ENCODE measurements at regions of chr9 and their contacts with region 1.

Region 1: GRCh38 chr9:87336914-87337333 is 160.7 kb upstream of the DAPK1 start:
- DNase-seq: peak in 4 of 14 experiments; percentile 2 to 56 (median 36)
- ATAC-seq: no peak
- H3K4me3 ChIP-seq: peak overlapping the region; percentile 29
- H3K4me3 Mint-ChIP-seq: peak overlapping the region; percentile 83
- H3K27ac ChIP-seq: no peak overlapping the region
- H3K27ac Mint-ChIP-seq: no peak overlapping the region
- H3K4me1 ChIP-seq: peaks cover 4% of the 10 kb centered on the region
- H3K4me1 Mint-ChIP-seq: peaks cover 11% of the 10 kb centered on the region
- H3K27me3 ChIP-seq: peaks cover 20 to 28% of the 10 kb centered on the region in 2 experiments
- H3K27me3 Mint-ChIP-seq: peaks cover 34% of the 10 kb centered on the region
- CTCF ChIP-seq: peak; percentile 72

Region 2: GRCh38 chr9:87640385-87640795 is 303.5 kb after region 1 on chr9:
- CTCF ChIA-PET with region 1: no interaction called
- POLR2A ChIA-PET with region 1: no interaction called
- intact Hi-C with region 1: loop called in 1 of 2 experiments (anchors 5 kb)
- DNase-seq: no peak
- ATAC-seq: no peak
- H3K4me3 ChIP-seq: no peak overlapping the region
- H3K4me3 Mint-ChIP-seq: no peak overlapping the region
- H3K27ac ChIP-seq: no peak overlapping the region
- H3K27ac Mint-ChIP-seq: no peak overlapping the region
- H3K4me1 ChIP-seq: no peaks in the 10 kb centered on the region
- H3K4me1 Mint-ChIP-seq: peaks cover 23% of the 10 kb centered on the region
- H3K27me3 ChIP-seq: no peaks in the 10 kb centered on the region
- H3K27me3 Mint-ChIP-seq: no peaks in the 10 kb centered on the region
- CTCF ChIP-seq: no peak

Region 3: DNA sequence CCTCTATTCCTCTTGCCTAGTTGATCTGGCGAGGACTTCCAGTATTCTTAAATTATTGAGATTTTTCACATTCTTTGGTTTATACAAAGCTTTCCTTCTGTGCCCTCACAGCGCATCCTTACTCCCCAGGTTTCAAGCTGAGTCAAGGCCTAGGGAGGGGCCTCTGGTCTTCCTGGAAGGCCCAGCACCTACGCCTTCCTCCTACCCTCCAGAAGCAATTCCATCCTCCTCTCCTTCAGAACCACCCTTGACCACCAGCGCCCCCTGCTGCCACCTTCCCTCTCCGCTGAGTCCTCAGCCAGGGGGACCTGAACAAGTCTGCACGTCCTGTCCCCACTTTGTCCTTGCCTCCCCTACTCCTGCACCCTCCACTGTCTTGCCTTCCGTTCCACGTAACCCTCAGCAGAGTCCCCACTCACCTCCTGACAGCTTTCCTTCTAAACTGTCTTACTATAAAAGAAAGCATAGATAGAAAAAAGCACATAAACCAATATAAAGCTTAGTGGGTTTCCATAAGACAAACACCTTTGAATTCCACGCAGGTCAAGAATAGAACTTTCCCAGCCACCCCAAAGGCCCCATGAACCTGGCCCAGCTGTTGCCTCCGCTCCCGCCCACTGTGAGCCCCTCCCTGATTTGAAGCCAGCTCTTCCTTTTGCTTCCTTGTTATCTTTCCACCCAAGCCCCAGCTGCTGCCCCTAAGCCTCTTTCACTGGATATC is 326.0 kb after region 1 on chr9:
- CTCF ChIA-PET with region 1: no interaction called
- POLR2A ChIA-PET with region 1: no interaction called
- intact Hi-C with region 1: loop called in 1 of 2 experiments (anchors 1 kb)
- DNase-seq: peak in 10 of 14 experiments; percentile 7 to 61 (median 28)
- ATAC-seq: no peak
- H3K4me3 ChIP-seq: no peak overlapping the region
- H3K4me3 Mint-ChIP-seq: no peak overlapping the region
- H3K27ac ChIP-seq: no peak overlapping the region
- H3K27ac Mint-ChIP-seq: no peak overlapping the region
- H3K4me1 ChIP-seq: no peaks in the 10 kb centered on the region
- H3K4me1 Mint-ChIP-seq: no peaks in the 10 kb centered on the region
- H3K27me3 ChIP-seq: no peaks in the 10 kb centered on the region
- H3K27me3 Mint-ChIP-seq: no peaks in the 10 kb centered on the region
- CTCF ChIP-seq: peak; percentile 48

Region 4: GRCh38 chr9:87812375-87813118 is 475.6 kb after region 1 on chr9:
- CTCF ChIA-PET with region 1: no interaction called
- POLR2A ChIA-PET with region 1: no interaction called
- intact Hi-C with region 1: loop called (anchors 1 to 5 kb)
- DNase-seq: peak in 3 of 14 experiments; percentile 7 to 27 (median 21)
- ATAC-seq: peak; percentile 37
- H3K4me3 ChIP-seq: peak overlapping the region; percentile 10
- H3K4me3 Mint-ChIP-seq: peak overlapping the region; percentile 62
- H3K27ac ChIP-seq: no peak overlapping the region
- H3K27ac Mint-ChIP-seq: no peak overlapping the region
- H3K4me1 ChIP-seq: peaks cover 5% of the 10 kb centered on the region
- H3K4me1 Mint-ChIP-seq: peaks cover 18% of the 10 kb centered on the region
- H3K27me3 ChIP-seq: peaks cover 0 to 2% of the 10 kb centered on the region in 2 experiments
- H3K27me3 Mint-ChIP-seq: no peaks in the 10 kb centered on the region
- CTCF ChIP-seq: peak; percentile 61

Measured in CD4-positive, alpha-beta T cell (primary cell).